ENCODE measurements at regions of chr11 and their contacts with region 1.

Region 1: DNA sequence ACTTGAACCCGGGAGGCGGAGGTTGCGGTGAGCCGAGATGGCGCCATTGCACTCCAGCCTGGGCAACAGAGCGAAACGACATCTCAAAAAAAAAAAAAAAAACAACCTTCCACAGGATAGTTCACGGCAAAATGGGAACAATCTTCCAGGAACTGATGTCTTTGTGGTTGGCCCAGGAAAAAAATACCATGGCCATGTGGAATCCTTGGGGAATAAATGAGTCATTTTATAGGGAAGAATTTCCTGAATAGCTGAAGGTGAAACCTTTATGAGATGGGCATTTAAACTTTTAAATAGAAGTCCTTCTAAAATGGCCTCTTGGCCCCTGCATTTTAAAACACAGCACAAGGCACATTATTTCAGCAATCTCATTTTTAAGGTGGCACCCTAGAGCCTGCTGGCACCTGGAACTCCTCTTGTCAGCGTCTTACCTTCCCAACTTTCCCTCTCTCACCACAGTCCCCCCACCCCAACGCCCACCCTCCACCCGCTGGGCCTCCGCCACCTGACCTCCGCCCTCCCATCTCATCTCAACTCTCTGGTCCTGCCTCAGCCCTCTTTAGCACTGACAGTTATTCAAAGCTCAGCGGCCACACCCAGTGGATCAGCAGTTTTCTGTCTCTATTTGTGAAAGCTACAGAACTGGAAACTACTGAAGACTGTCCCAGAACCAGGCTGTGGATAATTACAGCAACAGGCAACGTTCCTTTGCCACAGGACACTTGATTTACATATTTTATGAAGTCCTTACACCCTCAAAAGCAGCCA is 43.1 kb downstream of the SCGB1A1 start:
- DNase-seq: peak; percentile 86
- H3K4me3 ChIP-seq: no peak overlapping the region
- H3K27me3 ChIP-seq: no peaks in the 10 kb centered on the region
- CTCF ChIP-seq: no peak

Region 2: DNA sequence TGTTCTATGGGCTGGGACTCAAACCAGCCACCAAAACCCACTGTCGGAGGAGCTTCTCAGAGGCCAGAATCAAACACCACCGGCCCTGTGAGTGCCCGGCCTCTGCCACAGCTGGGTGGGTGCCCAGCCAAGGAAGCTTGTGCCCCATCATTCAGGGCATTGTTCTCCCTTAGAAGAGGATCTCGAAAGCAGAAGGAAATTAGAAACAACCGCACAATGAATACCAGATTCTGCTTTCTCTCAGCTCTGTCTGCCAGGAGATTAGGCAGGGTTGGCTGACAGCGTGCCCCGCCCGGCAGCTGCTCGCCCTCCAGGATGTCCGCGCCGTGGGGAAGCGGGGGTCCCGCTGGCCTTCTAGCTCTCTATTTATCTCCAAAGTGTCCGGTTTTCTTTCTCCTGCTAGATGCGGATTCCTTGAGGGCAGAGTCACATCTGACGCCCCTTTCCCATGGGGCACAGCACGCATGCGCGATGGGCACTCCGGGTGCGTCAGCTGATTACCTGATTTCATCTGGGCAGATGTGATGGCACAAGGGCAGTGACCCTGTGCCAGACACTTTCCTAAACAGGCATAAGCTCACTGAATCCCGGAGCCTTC is 17.6 kb before region 1 on chr11:
- CTCF ChIA-PET with region 1: interaction called, 11 read pairs
- POLR2A ChIA-PET with region 1: interaction called, 5 read pairs
- DNase-seq: no peak
- H3K4me3 ChIP-seq: peak overlapping the region; percentile 50
- H3K27me3 ChIP-seq: no peaks in the 10 kb centered on the region
- CTCF ChIP-seq: no peak

Region 3: DNA sequence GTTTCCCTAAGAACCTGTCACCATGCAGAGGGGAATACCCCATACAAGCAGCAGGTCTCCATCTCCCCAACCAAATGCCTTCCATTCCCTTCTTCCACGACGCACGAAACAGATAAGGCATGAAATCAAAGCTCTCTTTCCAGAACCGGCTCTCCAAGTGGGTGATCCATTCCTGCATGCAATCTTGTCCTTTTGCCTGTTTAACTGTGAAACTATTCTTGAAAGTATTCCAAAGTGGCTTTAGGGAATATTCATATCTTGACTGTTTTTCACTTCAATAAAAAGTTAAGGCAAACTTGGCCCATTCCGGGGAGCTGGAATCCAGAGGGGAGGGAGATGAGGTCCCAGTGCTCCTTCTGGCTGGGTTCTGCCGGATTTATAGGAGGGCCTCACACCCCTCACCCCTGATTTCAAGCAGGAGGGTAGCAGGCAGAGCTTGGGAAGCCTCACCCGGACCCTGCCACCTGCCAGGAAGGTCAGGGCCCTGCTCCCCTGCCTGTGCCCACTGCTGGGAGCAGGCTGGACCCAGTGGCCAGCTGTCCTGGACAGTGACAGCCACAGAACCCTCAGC is 17.8 kb after region 1 on chr11:
- CTCF ChIA-PET with region 1: interaction called, 5 read pairs
- POLR2A ChIA-PET with region 1: interaction called, 19 read pairs
- DNase-seq: no peak
- H3K4me3 ChIP-seq: no peak overlapping the region
- H3K27me3 ChIP-seq: no peaks in the 10 kb centered on the region
- CTCF ChIP-seq: no peak

Measured in BJ (cell line).